Activated CD4-positive, alpha-beta T cell treated with anti-CD3 and anti-CD28 coated beads for 36 hours (primary cell): ENCODE measurements at regions of chr3 and their contacts with region 1.

Region 1: GRCh38 chr3:7953449-7954015 is 548.1 kb upstream of the LMCD1 start:
- DNase-seq: no peak
- ATAC-seq: no peak
- H3K4me3 Mint-ChIP-seq: no peak overlapping the region
- H3K27ac Mint-ChIP-seq: no peak overlapping the region
- H3K4me1 Mint-ChIP-seq: peaks cover 3% of the 10 kb centered on the region
- H3K27me3 Mint-ChIP-seq: no peaks in the 10 kb centered on the region

Region 2: DNA sequence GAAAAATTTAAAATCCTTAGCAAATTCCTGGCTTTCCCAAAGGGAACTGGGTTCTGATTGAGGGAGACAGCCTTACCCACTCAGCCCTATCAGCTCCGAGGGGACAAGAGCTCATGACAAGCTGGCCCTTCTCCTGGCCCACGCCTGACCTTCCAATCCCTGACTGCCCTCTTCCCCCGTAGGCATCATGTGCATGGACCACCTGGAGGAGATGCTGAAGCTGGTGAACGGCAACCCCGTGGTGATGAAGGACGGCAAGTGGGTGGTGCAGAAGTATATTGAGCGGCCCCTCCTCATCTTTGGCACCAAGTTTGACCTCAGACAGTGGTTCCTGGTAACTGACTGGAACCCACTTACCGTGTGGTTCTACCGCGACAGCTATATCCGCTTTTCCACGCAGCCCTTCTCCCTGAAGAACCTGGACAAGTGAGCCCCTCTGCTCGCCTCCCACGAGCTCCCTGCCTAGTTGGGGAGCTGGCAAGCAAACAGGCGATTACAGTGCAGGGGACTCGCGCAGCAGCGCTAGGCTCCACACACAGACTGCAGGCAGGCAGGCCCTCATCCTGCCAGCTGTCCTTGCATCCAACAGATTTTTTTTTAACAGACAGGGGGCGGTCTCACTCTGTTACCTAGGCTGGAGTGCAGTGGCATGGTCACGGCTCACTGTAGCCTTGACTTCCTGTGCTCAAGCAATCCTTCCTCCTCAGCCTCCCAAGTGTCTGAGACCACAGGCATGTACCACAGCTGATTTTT is 1873.5 kb after region 1 on chr3:
- CTCF ChIA-PET with region 1: no interaction called
- POLR2A ChIA-PET with region 1: interaction called, 10 read pairs
- intact Hi-C with region 1: no loop called
- DNase-seq: peak; percentile 50
- ATAC-seq: peak; percentile 84
- H3K4me3 Mint-ChIP-seq: no peak overlapping the region
- H3K27ac Mint-ChIP-seq: no peak overlapping the region
- H3K4me1 Mint-ChIP-seq: peaks cover 7% of the 10 kb centered on the region
- H3K27me3 Mint-ChIP-seq: no peaks in the 10 kb centered on the region